CD4-positive, alpha-beta T cell (primary cell): ENCODE measurements at regions of chr2 and their contacts with region 1.

Region 1: DNA sequence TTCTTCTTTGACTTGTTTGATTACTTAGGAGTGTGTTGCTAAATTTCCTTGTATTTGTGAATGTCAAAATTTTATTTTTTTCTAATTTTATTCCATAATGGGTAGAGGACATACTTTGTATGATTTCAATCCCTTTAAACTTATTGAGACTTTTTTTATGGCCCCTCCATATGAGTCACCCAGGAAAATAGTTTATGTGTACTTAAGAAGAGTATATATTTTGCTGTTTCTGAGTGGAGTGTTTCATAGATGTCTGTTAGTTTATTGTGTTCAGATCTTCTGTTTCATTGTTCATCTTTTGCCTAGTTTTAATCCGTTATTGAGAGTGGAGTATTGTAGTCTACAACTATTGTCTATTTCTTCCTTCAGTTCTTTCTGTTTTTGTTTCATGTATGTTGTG is 81.9 kb downstream of the EPB41L5 start:
- DNase-seq: no peak
- ATAC-seq: no peak
- H3K4me3 ChIP-seq: no peak overlapping the region
- H3K4me3 Mint-ChIP-seq: no peak overlapping the region
- H3K27ac ChIP-seq: no peak overlapping the region
- H3K27ac Mint-ChIP-seq: no peak overlapping the region
- H3K4me1 ChIP-seq: no peaks in the 10 kb centered on the region
- H3K4me1 Mint-ChIP-seq: no peaks in the 10 kb centered on the region
- H3K27me3 ChIP-seq: no peaks in the 10 kb centered on the region
- H3K27me3 Mint-ChIP-seq: no peaks in the 10 kb centered on the region
- CTCF ChIP-seq: no peak

Region 2: DNA sequence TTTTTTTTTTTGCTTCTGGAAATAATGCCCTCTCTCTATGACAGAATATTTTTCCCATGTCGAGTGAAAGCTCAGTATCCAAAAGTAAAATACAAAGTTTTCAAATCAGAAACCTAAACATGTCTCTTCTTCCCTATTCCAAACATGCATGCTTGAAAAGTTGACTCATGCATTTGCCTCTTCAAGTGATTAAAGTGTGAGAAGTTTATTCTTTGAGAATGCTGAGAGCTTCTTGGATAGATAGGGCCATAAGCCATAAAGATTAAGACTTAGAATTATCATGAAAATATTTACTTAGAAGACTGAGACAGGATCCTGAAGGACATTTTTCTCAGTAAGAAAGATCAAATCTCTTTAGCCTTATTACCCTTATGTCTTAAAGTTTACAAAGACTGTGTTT is 180.5 kb before region 1 on chr2:
- CTCF ChIA-PET with region 1: no interaction called
- POLR2A ChIA-PET with region 1: no interaction called
- intact Hi-C with region 1: no loop called
- DNase-seq: no peak
- ATAC-seq: no peak
- H3K4me3 ChIP-seq: no peak overlapping the region
- H3K4me3 Mint-ChIP-seq: no peak overlapping the region
- H3K27ac ChIP-seq: no peak overlapping the region
- H3K27ac Mint-ChIP-seq: no peak overlapping the region
- H3K4me1 ChIP-seq: no peaks in the 10 kb centered on the region
- H3K4me1 Mint-ChIP-seq: peaks cover 6% of the 10 kb centered on the region
- H3K27me3 ChIP-seq: no peaks in the 10 kb centered on the region
- H3K27me3 Mint-ChIP-seq: no peaks in the 10 kb centered on the region
- CTCF ChIP-seq: no peak

Region 3: GRCh38 chr2:120161190-120161589 is 66.4 kb after region 1 on chr2:
- CTCF ChIA-PET with region 1: no interaction called
- POLR2A ChIA-PET with region 1: no interaction called
- intact Hi-C with region 1: loop called in 1 of 2 experiments (anchors 5 kb)
- DNase-seq: no peak
- ATAC-seq: no peak
- H3K4me3 ChIP-seq: no peak overlapping the region
- H3K4me3 Mint-ChIP-seq: no peak overlapping the region
- H3K27ac ChIP-seq: no peak overlapping the region
- H3K27ac Mint-ChIP-seq: no peak overlapping the region
- H3K4me1 ChIP-seq: no peaks in the 10 kb centered on the region
- H3K4me1 Mint-ChIP-seq: no peaks in the 10 kb centered on the region
- H3K27me3 ChIP-seq: no peaks in the 10 kb centered on the region
- H3K27me3 Mint-ChIP-seq: no peaks in the 10 kb centered on the region
- CTCF ChIP-seq: no peak